ENCODE measurements at regions of chr14 and their contacts with region 1.

Region 1: GRCh38 chr14:35140718-35141581 is 18.6 kb downstream of the PRORP start:
- DNase-seq: no peak
- ATAC-seq: peak in 1 of 2 donors; percentile 52
- H3K4me3 ChIP-seq: no peak overlapping the region
- H3K27ac ChIP-seq: no peak overlapping the region
- H3K4me1 ChIP-seq: no peaks in the 10 kb centered on the region
- H3K27me3 ChIP-seq: no peaks in the 10 kb centered on the region
- CTCF ChIP-seq: peak; percentile 54

Region 2: DNA sequence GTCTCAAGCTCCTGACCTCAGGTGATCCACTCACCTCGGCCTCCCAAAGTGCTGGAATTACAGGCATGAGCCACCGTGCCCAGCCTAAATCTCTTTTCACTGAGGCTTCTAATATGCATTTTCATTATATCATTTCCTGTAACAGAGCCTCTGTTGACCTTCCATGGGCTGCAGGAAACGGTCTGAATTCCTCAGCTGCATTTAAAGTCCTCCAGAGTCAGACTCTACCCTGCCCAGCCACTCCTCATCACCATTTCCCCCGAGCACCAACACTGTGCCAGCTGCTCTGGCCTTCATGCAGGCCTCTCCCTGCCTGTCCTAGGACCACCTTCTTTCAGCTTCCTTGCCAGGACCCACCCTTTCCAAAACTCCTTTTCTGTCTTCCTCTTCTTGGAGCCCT is 273.4 kb after region 1 on chr14:
- intact Hi-C with region 1: loop called (anchors 5 kb)
- DNase-seq: no peak
- ATAC-seq: peak; percentile 26 to 50
- H3K4me3 ChIP-seq: no peak overlapping the region
- H3K27ac ChIP-seq: peak overlapping the region; percentile 59
- H3K4me1 ChIP-seq: peaks cover 41% of the 10 kb centered on the region
- H3K27me3 ChIP-seq: no peaks in the 10 kb centered on the region
- CTCF ChIP-seq: no peak